Psoas muscle (tissue), 8 donors: ENCODE measurements at regions of chr9 and their contacts with region 1.

Region 1: GRCh38 chr9:70352802-70353201 is 61.7 kb downstream of the KLF9 start:
- DNase-seq: no peak
- ATAC-seq: peak in 2 of 4 donors; percentile 48 to 75
- H3K4me3 ChIP-seq: no peak overlapping the region
- H3K27ac ChIP-seq: no peak overlapping the region
- H3K4me1 ChIP-seq: peaks cover 10% of the 10 kb centered on the region
- H3K27me3 ChIP-seq: no peaks in the 10 kb centered on the region
- CTCF ChIP-seq: peak; percentile 66

Region 2: GRCh38 chr9:69932901-69933300 is 419.9 kb before region 1 on chr9:
- intact Hi-C with region 1: no loop called
- DNase-seq: no peak
- ATAC-seq: no peak
- H3K4me3 ChIP-seq: no peak overlapping the region
- H3K27ac ChIP-seq: no peak overlapping the region
- H3K4me1 ChIP-seq: no peaks in the 10 kb centered on the region
- H3K27me3 ChIP-seq: no peaks in the 10 kb centered on the region
- CTCF ChIP-seq: no peak

Region 3: DNA sequence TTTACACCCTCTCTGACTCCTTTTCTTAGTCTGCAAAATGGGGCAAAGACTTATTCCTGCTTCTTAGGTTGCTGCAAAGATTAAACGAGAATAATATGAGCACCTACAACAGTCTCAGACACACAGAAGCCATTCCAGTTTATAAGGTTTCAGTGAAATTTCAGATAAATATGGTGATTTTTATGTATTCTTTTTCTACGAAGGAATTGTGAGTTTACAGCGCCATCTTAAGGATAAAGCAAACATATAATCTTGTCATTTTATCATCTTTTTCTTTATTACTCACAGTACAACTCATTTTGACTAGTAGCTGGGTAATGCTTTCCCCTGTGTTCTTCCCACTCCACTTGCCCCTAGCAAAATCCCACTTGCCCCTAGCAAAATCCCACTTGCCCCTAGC is 123.2 kb before region 1 on chr9:
- intact Hi-C with region 1: no loop called
- DNase-seq: no peak
- ATAC-seq: peak in 2 of 4 donors; percentile 41 to 78
- H3K4me3 ChIP-seq: peak overlapping the region; percentile 38
- H3K27ac ChIP-seq: no peak overlapping the region
- H3K4me1 ChIP-seq: peaks cover 24% of the 10 kb centered on the region
- H3K27me3 ChIP-seq: no peaks in the 10 kb centered on the region
- CTCF ChIP-seq: peak; percentile 47

Region 4: DNA sequence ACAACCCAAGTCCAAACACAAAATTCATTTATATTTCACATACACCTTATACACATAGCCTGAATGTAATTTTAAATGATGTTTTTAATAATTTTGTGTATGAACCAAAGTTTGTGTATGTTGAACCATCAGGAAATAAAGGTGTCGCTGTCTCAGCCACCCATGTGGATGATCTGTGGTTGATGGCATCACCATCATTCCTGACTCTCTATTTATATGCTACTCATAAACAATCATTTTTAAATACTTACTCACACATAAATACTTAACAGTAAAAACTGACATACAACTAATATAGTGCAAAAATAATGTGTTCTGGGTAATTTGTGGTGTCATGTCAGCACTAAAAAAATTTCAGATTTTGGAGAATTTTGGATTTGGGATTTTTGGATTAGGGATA is 55.7 kb before region 1 on chr9:
- intact Hi-C with region 1: no loop called
- DNase-seq: no peak
- ATAC-seq: peak in 1 of 4 donors; percentile 9
- H3K4me3 ChIP-seq: no peak overlapping the region
- H3K27ac ChIP-seq: no peak overlapping the region
- H3K4me1 ChIP-seq: no peaks in the 10 kb centered on the region
- H3K27me3 ChIP-seq: no peaks in the 10 kb centered on the region
- CTCF ChIP-seq: no peak

Region 5: DNA sequence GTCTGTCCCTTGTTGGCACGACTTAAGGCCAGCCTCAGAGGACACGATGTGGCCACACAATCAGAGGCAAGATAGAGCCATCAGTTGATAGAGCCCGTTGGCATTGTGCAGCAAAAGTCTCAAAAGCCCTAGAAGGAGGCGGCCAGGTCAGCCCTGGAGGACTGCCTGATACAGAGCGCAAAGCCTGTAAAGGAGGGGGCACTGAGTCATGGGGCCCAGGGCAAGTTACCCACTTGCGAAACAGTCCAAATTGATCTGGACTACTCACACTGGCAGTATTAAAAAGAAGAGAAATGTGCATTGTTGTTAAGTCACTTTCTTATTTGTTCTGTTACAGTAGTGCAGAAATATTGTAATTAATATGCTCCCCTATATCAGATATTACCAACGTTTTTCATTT is 10.2 kb after region 1 on chr9:
- intact Hi-C with region 1: no loop called
- DNase-seq: no peak
- ATAC-seq: peak in 3 of 4 donors; percentile 30 to 44 (median 40)
- H3K4me3 ChIP-seq: no peak overlapping the region
- H3K27ac ChIP-seq: no peak overlapping the region
- H3K4me1 ChIP-seq: peaks cover 9% of the 10 kb centered on the region
- H3K27me3 ChIP-seq: no peaks in the 10 kb centered on the region
- CTCF ChIP-seq: no peak

Region 6: DNA sequence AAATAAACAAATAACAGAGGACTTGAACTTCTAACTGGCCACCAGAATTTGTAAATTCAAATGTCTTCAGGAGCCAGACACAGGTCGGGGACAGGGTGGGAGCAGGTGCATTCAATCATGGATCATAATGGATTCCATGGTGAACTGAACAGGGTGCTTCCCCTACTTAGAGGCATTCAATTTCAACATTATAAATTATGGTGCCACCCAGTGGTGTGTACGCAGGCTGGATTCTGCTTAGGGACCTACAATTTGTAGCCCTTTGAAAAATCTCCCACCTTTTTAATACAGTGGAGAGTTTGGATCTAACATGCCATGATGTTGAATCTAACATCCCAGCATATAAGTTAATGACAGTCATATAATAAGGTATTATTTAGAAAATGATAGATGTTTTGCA is 39.4 kb after region 1 on chr9:
- intact Hi-C with region 1: loop called in 1 of 2 experiments (anchors 5 kb)
- DNase-seq: no peak
- ATAC-seq: peak; percentile 49 to 65 (median 64)
- H3K4me3 ChIP-seq: peak overlapping the region; percentile 32
- H3K27ac ChIP-seq: peak overlapping the region; percentile 57
- H3K4me1 ChIP-seq: peaks cover 88% of the 10 kb centered on the region
- H3K27me3 ChIP-seq: no peaks in the 10 kb centered on the region
- CTCF ChIP-seq: peak; percentile 38